Activated CD4-positive, alpha-beta memory T cell treated with anti-CD3 and anti-CD28 coated beads for 36 hours (primary cell): ENCODE measurements at regions of chr1 and their contacts with region 1.

Region 1: GRCh38 chr1:214439352-214440119 is 111.9 kb downstream of the PTPN14 start:
- DNase-seq: peak; percentile 81
- H3K4me3 Mint-ChIP-seq: peak overlapping the region; percentile 44
- H3K27ac Mint-ChIP-seq: peak overlapping the region; percentile 96
- H3K4me1 Mint-ChIP-seq: peaks cover 41% of the 10 kb centered on the region
- H3K27me3 Mint-ChIP-seq: peaks cover 1% of the 10 kb centered on the region

Region 2: DNA sequence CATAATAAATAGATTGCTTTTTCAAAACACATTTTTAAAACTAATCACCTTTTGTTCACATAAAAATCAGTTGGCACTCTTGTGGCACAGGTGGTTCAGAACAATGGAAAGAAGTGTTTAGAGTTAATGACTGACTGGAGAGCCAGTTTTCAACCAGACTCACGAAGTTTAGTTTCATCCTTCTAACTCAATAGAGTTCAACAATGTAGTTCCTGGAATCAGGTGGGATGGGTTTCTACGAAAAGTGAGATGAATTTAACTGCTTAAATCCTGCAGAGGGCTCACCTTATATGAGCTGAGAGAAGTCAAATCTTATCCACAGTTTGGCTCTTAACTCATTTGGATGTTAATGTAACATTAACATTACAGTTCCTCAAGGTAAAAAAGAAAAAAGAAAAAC is 42.0 kb before region 1 on chr1:
- CTCF ChIA-PET with region 1: no interaction called
- POLR2A ChIA-PET with region 1: no interaction called
- intact Hi-C with region 1: loop called (anchors 2 kb)
- DNase-seq: no peak
- H3K4me3 Mint-ChIP-seq: no peak overlapping the region
- H3K27ac Mint-ChIP-seq: no peak overlapping the region
- H3K4me1 Mint-ChIP-seq: peaks cover 20% of the 10 kb centered on the region
- H3K27me3 Mint-ChIP-seq: peaks cover 2% of the 10 kb centered on the region

Region 3: GRCh38 chr1:214427871-214428277 is 11.7 kb before region 1 on chr1:
- CTCF ChIA-PET with region 1: interaction called, 4 read pairs
- POLR2A ChIA-PET with region 1: interaction called, 9 read pairs
- intact Hi-C with region 1: loop called (anchors 1 kb)
- DNase-seq: peak; percentile 89
- H3K4me3 Mint-ChIP-seq: peak overlapping the region; percentile 42
- H3K27ac Mint-ChIP-seq: peak overlapping the region; percentile 92
- H3K4me1 Mint-ChIP-seq: peaks cover 22% of the 10 kb centered on the region
- H3K27me3 Mint-ChIP-seq: no peaks in the 10 kb centered on the region

Region 4: DNA sequence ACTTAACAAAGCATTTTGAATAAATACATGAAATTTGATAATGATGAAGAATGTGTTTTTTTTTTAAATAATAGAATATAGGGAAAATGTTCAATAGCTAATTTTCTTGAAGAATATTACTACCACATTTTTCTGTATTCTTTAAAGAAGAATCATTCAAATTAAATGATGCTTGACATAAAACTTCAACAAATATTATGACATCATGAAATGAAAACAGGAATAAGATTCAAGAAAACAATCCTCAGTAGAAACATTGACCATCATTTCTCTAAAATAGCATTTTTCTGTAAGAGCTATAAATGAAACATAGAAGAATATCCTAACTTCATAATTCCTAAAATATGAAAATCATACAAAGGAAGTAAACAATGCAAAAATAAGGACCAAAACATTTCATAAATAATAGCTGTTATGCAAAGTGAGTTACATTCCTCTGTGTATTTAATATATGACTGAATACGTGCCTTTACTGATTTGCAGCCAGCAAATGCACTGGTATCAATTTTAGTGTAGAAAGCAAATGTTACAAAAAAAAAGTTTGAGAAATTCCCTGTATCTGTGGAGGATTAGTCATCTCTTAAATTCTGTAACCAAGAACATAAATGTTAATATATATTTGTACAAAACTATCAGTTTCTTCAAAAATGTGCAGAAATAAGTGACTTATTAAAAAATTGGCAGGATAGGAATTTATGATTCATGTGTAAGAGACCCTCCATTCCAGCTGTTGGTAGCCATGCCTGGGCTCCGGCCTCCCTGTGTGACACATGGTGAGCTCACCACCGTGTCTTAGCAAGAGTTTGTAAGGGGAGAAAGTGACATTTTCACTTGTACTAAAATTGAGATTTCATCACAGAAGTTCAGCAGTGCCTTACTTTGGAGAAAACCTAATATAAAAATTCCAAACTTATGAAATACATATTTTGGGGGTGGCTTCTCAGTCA is 126.9 kb after region 1 on chr1:
- CTCF ChIA-PET with region 1: no interaction called
- POLR2A ChIA-PET with region 1: no interaction called
- intact Hi-C with region 1: loop called (anchors 5 kb)
- DNase-seq: peak; percentile 43
- H3K4me3 Mint-ChIP-seq: no peak overlapping the region
- H3K27ac Mint-ChIP-seq: no peak overlapping the region
- H3K4me1 Mint-ChIP-seq: no peaks in the 10 kb centered on the region
- H3K27me3 Mint-ChIP-seq: peaks cover 19% of the 10 kb centered on the region

Region 5: GRCh38 chr1:215043401-215043800 is 603.9 kb after region 1 on chr1:
- CTCF ChIA-PET with region 1: no interaction called
- POLR2A ChIA-PET with region 1: no interaction called
- intact Hi-C with region 1: loop called (anchors 5 kb)
- DNase-seq: peak; percentile 34
- H3K4me3 Mint-ChIP-seq: no peak overlapping the region
- H3K27ac Mint-ChIP-seq: no peak overlapping the region
- H3K4me1 Mint-ChIP-seq: no peaks in the 10 kb centered on the region
- H3K27me3 Mint-ChIP-seq: peaks cover 5% of the 10 kb centered on the region